ENCODE measurements at regions of chr17 and their contacts with region 1.

Region 1: DNA sequence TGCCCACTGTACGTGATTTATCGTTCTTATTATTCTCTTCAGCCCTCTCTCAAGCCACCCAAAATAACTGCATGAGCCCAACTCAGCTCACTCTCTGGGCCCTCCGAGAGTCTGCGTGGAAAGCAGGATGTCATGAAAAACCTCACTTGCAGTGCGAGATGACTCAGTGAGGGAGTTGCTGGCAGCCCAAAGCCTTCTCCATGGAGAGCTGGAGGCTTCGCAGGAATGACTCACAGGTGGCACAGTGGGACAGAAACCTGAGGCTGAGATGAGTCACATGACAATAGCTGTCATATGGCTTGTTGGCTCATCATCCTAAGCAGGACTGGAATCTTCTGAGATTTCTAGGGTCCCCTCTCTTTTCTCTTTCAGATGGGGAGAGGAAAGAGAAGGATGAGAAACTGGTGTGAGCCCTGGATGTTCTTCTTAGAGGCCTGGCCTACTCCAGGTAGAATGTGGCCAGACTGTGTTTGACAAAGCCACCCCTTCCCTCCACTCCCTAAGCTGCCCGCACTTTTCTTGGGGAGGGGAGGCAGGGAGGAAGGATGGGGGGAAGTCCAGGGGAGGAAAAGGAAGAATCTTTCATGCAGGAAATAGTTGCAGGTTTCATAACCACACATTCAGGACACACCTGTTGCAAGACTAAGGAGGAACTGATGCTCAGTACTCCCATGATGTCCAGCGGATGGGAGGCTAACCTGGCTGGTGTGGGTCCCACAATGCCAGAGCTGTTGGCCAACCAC is 160.6 kb upstream of the RPL38 start:
- DNase-seq: peak; percentile 33
- ATAC-seq: no peak
- H3K4me3 ChIP-seq: no peak overlapping the region
- H3K27ac ChIP-seq: no peak overlapping the region
- H3K4me1 ChIP-seq: no peaks in the 10 kb centered on the region
- H3K27me3 ChIP-seq: no peaks in the 10 kb centered on the region
- CTCF ChIP-seq: no peak
- POLR2A ChIP-seq: no peak
- RAD21 ChIP-seq: no peak

Region 2: DNA sequence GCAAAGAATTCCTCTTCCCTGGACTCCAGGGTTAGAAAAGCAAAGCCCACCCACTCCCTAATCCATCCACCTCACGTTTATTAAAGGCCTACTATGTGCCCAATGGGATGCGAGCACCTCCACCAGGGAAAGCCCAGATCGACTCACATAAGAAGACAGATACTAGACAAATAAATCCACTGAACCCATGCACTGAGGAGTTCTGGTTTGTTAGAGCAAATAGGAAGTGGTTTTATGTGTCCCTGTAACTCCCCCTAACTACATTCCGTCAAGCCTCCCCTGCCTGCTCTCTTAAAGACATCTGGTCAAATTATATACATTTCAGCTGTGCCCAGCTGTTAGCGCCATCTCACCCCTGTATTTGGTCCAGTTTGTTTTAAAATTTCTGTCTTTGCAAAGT is 58.0 kb before region 1 on chr17:
- CTCF ChIA-PET with region 1: no interaction called
- POLR2A ChIA-PET with region 1: no interaction called
- dilution Hi-C with region 1: no loop called
- in situ Hi-C with region 1: loop called (anchors 10 kb)
- intact Hi-C with region 1: no loop called
- DNase-seq: no peak
- ATAC-seq: no peak
- H3K4me3 ChIP-seq: no peak overlapping the region
- H3K27ac ChIP-seq: no peak overlapping the region
- H3K4me1 ChIP-seq: no peaks in the 10 kb centered on the region
- H3K27me3 ChIP-seq: no peaks in the 10 kb centered on the region
- CTCF ChIP-seq: no peak
- POLR2A ChIP-seq: no peak
- RAD21 ChIP-seq: no peak

Region 3: GRCh38 chr17:74062234-74062633 is 19.3 kb after region 1 on chr17:
- CTCF ChIA-PET with region 1: no interaction called
- POLR2A ChIA-PET with region 1: no interaction called
- dilution Hi-C with region 1: no loop called
- in situ Hi-C with region 1: no loop called
- intact Hi-C with region 1: no loop called
- DNase-seq: no peak
- ATAC-seq: no peak
- H3K4me3 ChIP-seq: no peak overlapping the region
- H3K27ac ChIP-seq: no peak overlapping the region
- H3K4me1 ChIP-seq: no peaks in the 10 kb centered on the region
- H3K27me3 ChIP-seq: no peaks in the 10 kb centered on the region
- CTCF ChIP-seq: no peak
- POLR2A ChIP-seq: no peak
- RAD21 ChIP-seq: no peak

Region 4: GRCh38 chr17:74163271-74163821 is 120.4 kb after region 1 on chr17:
- CTCF ChIA-PET with region 1: no interaction called
- POLR2A ChIA-PET with region 1: no interaction called
- dilution Hi-C with region 1: no loop called
- in situ Hi-C with region 1: no loop called
- intact Hi-C with region 1: no loop called
- DNase-seq: no peak
- ATAC-seq: no peak
- H3K4me3 ChIP-seq: no peak overlapping the region
- H3K27ac ChIP-seq: no peak overlapping the region
- H3K4me1 ChIP-seq: no peaks in the 10 kb centered on the region
- H3K27me3 ChIP-seq: no peaks in the 10 kb centered on the region
- CTCF ChIP-seq: no peak
- POLR2A ChIP-seq: no peak
- RAD21 ChIP-seq: no peak

Measured in IMR-90 (cell line).